ENCODE measurements at regions of chr15 and their contacts with region 1.

Region 1: DNA sequence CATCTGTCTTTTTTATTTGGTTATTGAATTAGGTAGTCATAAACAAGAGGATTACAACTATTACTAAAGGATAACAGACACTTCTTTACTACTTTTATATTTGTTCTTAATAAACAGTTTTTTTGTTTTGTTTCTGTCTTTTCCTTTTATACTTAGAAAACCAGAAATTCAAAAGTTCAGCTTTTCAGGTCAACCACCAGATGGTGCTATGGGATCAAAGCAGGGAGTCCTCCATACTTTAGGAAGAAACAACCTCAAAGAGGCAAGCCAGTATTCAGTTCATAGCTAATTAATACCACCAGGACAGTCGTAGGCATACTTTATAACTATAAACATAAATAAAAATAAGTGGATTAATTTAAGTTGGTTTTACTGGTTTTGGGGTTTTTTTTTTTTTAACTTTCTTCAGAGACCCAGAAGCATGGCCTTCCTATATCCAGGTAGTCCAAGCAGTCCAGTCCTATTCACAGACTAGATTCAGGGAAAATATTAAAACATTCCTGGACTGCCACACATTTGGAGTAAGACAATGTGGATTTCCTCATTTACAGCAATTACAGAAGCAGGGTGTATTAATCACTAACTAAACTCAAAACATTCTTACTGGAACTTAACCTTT is 16.0 kb upstream of the EID1 start:
- DNase-seq: peak; percentile 61 to 72 (median 65)
- H3K4me3 ChIP-seq: no peak overlapping the region
- H3K4me3 Mint-ChIP-seq: no peak overlapping the region
- H3K27ac ChIP-seq: no peak overlapping the region
- H3K27ac Mint-ChIP-seq: no peak overlapping the region
- H3K4me1 ChIP-seq: no peaks in the 10 kb centered on the region
- H3K4me1 Mint-ChIP-seq: peaks cover 0 to 4% (median under 1%) of the 10 kb centered on the region in 4 donors
- H3K27me3 ChIP-seq: no peaks in the 10 kb centered on the region
- H3K27me3 Mint-ChIP-seq: peaks cover 3 to 4% of the 10 kb centered on the region in 2 donors

Region 2: GRCh38 chr15:48877630-48878595 is 16.0 kb after region 1 on chr15 and contains the start of gene EID1:
- CTCF ChIA-PET with region 1: interaction called, 24 read pairs
- POLR2A ChIA-PET with region 1: interaction called, 21 read pairs
- intact Hi-C with region 1: no loop called
- DNase-seq: peak; percentile 93 to 95 (median 94)
- H3K4me3 ChIP-seq: peak within 1 kb of the TSS; percentile 74 to 96
- H3K4me3 Mint-ChIP-seq: peak within 1 kb of the TSS; percentile 96 to 100 (median 98)
- H3K27ac ChIP-seq: peak within 1 kb of the TSS; percentile 71
- H3K27ac Mint-ChIP-seq: peak within 1 kb of the TSS; percentile 97 to 100 (median 99)
- H3K4me1 ChIP-seq: peaks cover 26% of the 10 kb centered on the region
- H3K4me1 Mint-ChIP-seq: peaks cover 18 to 31% (median 24%) of the 10 kb centered on the region in 4 donors
- H3K27me3 ChIP-seq: no peaks in the 10 kb centered on the region
- H3K27me3 Mint-ChIP-seq: peaks cover 3 to 4% of the 10 kb centered on the region in 2 donors
- total RNA-seq, gene EID1: 76.0 to 91.2 TPM

Region 3: GRCh38 chr15:49046220-49047102 is 184.5 kb after region 1 on chr15 and contains the start of gene SECISBP2L:
- CTCF ChIA-PET with region 1: no interaction called
- POLR2A ChIA-PET with region 1: no interaction called
- intact Hi-C with region 1: loop called (anchors 5 kb)
- DNase-seq: peak; percentile 89 to 93 (median 91)
- H3K4me3 ChIP-seq: peak within 1 kb of the TSS; percentile 80 to 88
- H3K4me3 Mint-ChIP-seq: peak within 1 kb of the TSS; percentile 95 to 97 (median 96)
- H3K27ac ChIP-seq: peak within 1 kb of the TSS; percentile 62
- H3K27ac Mint-ChIP-seq: peak within 1 kb of the TSS; percentile 92 to 97 (median 92)
- H3K4me1 ChIP-seq: peaks cover 35% of the 10 kb centered on the region
- H3K4me1 Mint-ChIP-seq: peaks cover 19 to 44% (median 29%) of the 10 kb centered on the region in 4 donors
- H3K27me3 ChIP-seq: no peaks in the 10 kb centered on the region
- H3K27me3 Mint-ChIP-seq: no peaks in the 10 kb centered on the region
- total RNA-seq, gene SECISBP2L: 64.3 to 72.9 TPM

Region 4: GRCh38 chr15:49235446-49236124 is 373.7 kb after region 1 on chr15:
- CTCF ChIA-PET with region 1: interaction called, 12 read pairs
- POLR2A ChIA-PET with region 1: no interaction called
- intact Hi-C with region 1: loop called (anchors 1 kb)
- DNase-seq: peak; percentile 36 to 46 (median 41)
- H3K4me3 ChIP-seq: no peak overlapping the region
- H3K4me3 Mint-ChIP-seq: no peak overlapping the region
- H3K27ac ChIP-seq: no peak overlapping the region
- H3K27ac Mint-ChIP-seq: peak overlapping the region in 6 of 7 donors; percentile 31 to 86 (median 70)
- H3K4me1 ChIP-seq: peaks cover 10% of the 10 kb centered on the region
- H3K4me1 Mint-ChIP-seq: peaks cover 10 to 16% (median 13%) of the 10 kb centered on the region in 4 donors
- H3K27me3 ChIP-seq: no peaks in the 10 kb centered on the region
- H3K27me3 Mint-ChIP-seq: no peaks in the 10 kb centered on the region

Region 5: GRCh38 chr15:50003786-50004334 is 1141.9 kb after region 1 on chr15:
- CTCF ChIA-PET with region 1: interaction called, 16 read pairs
- POLR2A ChIA-PET with region 1: no interaction called
- intact Hi-C with region 1: no loop called
- DNase-seq: peak; percentile 44 to 58 (median 48)
- H3K4me3 ChIP-seq: no peak overlapping the region
- H3K4me3 Mint-ChIP-seq: no peak overlapping the region
- H3K27ac ChIP-seq: no peak overlapping the region
- H3K27ac Mint-ChIP-seq: peak overlapping the region in 5 of 7 donors; percentile 13 to 63 (median 41)
- H3K4me1 ChIP-seq: peaks cover 5% of the 10 kb centered on the region
- H3K4me1 Mint-ChIP-seq: peaks cover 0 to 9% (median 6%) of the 10 kb centered on the region in 4 donors
- H3K27me3 ChIP-seq: no peaks in the 10 kb centered on the region
- H3K27me3 Mint-ChIP-seq: no peaks in the 10 kb centered on the region

Region 6: GRCh38 chr15:50145451-50145872 is 1283.5 kb after region 1 on chr15:
- CTCF ChIA-PET with region 1: interaction called, 81 read pairs
- POLR2A ChIA-PET with region 1: no interaction called
- intact Hi-C with region 1: loop called (anchors 1 kb)
- DNase-seq: peak in 4 of 5 donors; percentile 28 to 50 (median 34)
- H3K4me3 ChIP-seq: no peak overlapping the region
- H3K4me3 Mint-ChIP-seq: no peak overlapping the region
- H3K27ac ChIP-seq: no peak overlapping the region
- H3K27ac Mint-ChIP-seq: no peak overlapping the region
- H3K4me1 ChIP-seq: no peaks in the 10 kb centered on the region
- H3K4me1 Mint-ChIP-seq: no peaks in the 10 kb centered on the region
- H3K27me3 ChIP-seq: no peaks in the 10 kb centered on the region
- H3K27me3 Mint-ChIP-seq: no peaks in the 10 kb centered on the region

Measured in CD4-positive, alpha-beta memory T cell (primary cell).